ENCODE measurements at regions of chr7 and their contacts with region 1.

Region 1: DNA sequence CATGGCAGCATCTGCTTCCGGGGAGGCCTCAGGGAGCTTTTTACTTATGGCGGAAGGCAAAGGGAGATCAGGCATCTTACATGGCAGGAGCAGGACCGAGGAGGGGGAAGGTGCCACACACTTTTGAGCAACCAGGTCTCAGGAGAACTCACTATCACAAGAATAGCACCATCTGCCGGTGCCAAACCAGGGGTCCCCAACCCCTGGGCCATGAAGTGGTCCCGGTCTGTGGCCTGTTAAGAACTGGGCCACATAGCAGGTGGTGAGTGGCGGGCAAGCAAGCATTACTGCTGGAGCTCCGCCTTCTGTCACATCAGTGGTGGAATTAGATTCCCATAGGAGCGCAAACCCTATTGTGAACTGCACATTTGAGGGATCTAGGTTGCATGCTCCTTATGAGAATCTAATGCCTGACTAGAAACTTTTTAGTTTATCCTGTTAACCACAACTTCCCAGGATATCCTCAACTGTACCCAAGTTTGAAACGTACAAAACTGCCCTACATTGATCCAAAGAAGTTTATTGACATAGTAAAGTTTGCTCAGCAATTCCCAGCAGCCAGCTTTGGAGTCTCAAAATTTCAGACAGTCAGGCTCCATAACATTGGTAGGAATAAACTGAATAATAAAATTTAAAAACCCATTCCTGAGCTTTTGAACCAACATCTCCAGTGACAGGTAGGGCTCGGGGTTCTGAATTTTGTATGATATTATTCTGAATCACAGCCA is 228.4 kb upstream of the TAC1 start:
- DNase-seq: no peak
- H3K4me3 ChIP-seq: no peak overlapping the region
- H3K27ac ChIP-seq: no peak overlapping the region
- H3K4me1 ChIP-seq: no peaks in the 10 kb centered on the region
- H3K27me3 ChIP-seq: peaks cover 0 to 5% (median 0%) of the 10 kb centered on the region in 4 donors
- CTCF ChIP-seq: no peak
- EP300 ChIP-seq: no peak
- POLR2A ChIP-seq: no peak

Region 2: GRCh38 chr7:95886501-95887090 is 1616.9 kb before region 1 on chr7:
- intact Hi-C with region 1: no loop called
- DNase-seq: peak; percentile 64
- H3K4me3 ChIP-seq: no peak overlapping the region
- H3K27ac ChIP-seq: no peak overlapping the region
- H3K4me1 ChIP-seq: no peaks in the 10 kb centered on the region
- H3K27me3 ChIP-seq: no peaks in the 10 kb centered on the region
- CTCF ChIP-seq: no peak
- EP300 ChIP-seq: no peak
- POLR2A ChIP-seq: no peak

Region 3: DNA sequence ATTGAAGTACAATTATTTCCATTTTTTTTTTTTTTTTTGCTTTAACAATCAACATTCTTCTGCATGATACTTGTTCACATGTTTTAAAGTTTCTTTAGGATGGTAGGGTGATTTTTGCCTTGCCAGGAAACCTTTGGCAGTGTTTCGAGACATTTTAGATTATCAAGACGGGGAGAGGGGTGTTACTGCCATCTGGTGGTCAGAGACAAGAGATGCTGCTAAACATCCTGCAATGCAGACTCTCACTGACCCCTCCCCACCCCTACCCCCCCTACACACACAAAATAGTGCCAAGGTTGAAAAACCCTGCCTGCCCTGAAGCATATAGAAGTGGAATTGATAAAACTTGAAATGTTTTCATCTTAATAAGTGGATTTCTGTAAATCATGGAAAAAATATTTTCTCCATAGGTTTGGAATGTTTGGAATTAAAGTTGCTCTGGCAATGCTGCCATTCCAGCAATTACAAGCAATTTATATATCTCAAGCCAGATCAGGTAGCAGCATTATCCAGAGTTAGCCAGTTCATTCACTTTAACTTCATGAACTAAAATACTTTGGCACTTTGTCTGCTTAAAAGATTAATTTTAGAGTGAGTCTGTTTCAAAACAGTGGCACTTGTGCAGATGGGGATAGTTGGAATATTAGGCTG is 324.0 kb before region 1 on chr7:
- intact Hi-C with region 1: no loop called
- DNase-seq: no peak
- H3K4me3 ChIP-seq: no peak overlapping the region
- H3K27ac ChIP-seq: no peak overlapping the region
- H3K4me1 ChIP-seq: peaks cover 0 to 2% (median 0%) of the 10 kb centered on the region in 4 donors
- H3K27me3 ChIP-seq: no peaks in the 10 kb centered on the region
- CTCF ChIP-seq: peak; percentile 61 to 78 (median 77)
- EP300 ChIP-seq: no peak
- POLR2A ChIP-seq: no peak

Region 4: GRCh38 chr7:97835296-97836138 is 332.0 kb after region 1 on chr7:
- intact Hi-C with region 1: loop called (anchors 5 kb)
- DNase-seq: no peak
- H3K4me3 ChIP-seq: no peak overlapping the region
- H3K27ac ChIP-seq: no peak overlapping the region
- H3K4me1 ChIP-seq: no peaks in the 10 kb centered on the region
- H3K27me3 ChIP-seq: peaks cover 0 to 19% (median 3%) of the 10 kb centered on the region in 4 donors
- CTCF ChIP-seq: peak; percentile 49 to 65 (median 60)
- EP300 ChIP-seq: no peak
- POLR2A ChIP-seq: no peak

Measured in esophagus muscularis mucosa (tissue), 4 donors.